Transverse colon (tissue), 4 donors: ENCODE measurements at regions of chr16 and their contacts with region 1.

Region 1: DNA sequence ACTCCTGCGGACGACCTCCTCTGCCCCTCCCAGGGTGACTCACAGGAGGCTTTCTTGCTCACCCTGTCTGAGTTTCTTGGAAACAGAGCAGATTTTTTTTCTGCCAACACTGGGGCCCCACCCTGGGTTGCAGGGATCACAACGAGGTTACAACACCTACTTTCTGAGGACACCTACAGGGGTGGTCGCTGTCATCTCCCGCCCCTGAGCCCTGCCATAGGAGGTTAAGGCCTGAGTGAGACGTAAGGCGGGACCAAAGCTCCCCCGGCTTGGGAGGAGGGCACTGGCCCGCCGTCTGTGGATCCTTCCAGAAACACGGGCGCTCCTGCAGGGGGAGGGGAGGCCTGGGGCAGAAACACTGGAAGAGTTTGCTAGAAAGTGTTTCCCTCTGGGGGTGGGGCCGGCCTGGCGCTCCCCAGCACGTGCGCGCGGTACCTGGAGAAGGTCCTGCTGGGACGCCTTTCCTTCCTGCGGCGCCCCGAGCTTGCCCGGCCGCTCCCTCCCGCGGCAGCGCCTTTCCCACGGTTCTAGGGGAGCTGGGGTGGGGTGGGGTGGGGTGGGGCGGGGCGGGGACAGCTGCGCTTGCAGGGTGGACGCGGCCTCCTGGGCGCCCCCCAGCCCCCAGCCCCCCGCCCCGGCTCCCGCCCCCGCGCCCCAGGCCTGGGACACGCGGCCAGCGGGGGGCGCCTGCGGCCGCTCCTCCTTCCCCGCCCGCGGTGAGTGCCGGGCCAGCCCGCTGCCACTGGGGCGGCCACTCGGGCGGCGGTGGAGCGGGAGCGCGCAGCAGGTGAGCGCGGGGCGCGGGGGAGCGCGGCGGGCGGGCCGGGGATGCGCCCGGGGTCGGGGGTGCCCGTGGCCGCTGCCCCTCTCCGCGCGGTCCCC is 20.7 kb upstream of the ADCY7 start:
- DNase-seq: peak; percentile 68
- H3K4me3 ChIP-seq: peak overlapping the region; percentile 46 to 78 (median 67)
- H3K27ac ChIP-seq: peak overlapping the region; percentile 47 to 60 (median 51)
- H3K4me1 ChIP-seq: peaks cover 8 to 34% (median 20%) of the 10 kb centered on the region in 4 donors
- H3K27me3 ChIP-seq: no peaks in the 10 kb centered on the region
- CTCF ChIP-seq: peak in 2 of 5 experiments; percentile 18 to 20
- EP300 ChIP-seq: no peak
- POLR2A ChIP-seq: no peak

Region 2: GRCh38 chr16:50354629-50355456 is 109.2 kb after region 1 on chr16:
- in situ Hi-C with region 1: loop called in 2 of 4 experiments (anchors 10 to 25 kb)
- intact Hi-C with region 1: no loop called
- DNase-seq: no peak
- H3K4me3 ChIP-seq: no peak overlapping the region
- H3K27ac ChIP-seq: peak overlapping the region; percentile 6 to 44 (median 32)
- H3K4me1 ChIP-seq: peaks cover 0 to 3% (median 0%) of the 10 kb centered on the region in 4 donors
- H3K27me3 ChIP-seq: no peaks in the 10 kb centered on the region
- CTCF ChIP-seq: peak; percentile 55 to 63 (median 59)
- EP300 ChIP-seq: no peak
- POLR2A ChIP-seq: no peak

Region 3: GRCh38 chr16:50665128-50665878 is 419.6 kb after region 1 on chr16:
- in situ Hi-C with region 1: loop called in 1 of 4 experiments (anchors 25 kb)
- intact Hi-C with region 1: no loop called
- DNase-seq: peak; percentile 82
- H3K4me3 ChIP-seq: peak overlapping the region; percentile 18 to 54 (median 32)
- H3K27ac ChIP-seq: peak overlapping the region; percentile 36 to 69 (median 68)
- H3K4me1 ChIP-seq: peaks cover 0 to 10% (median 6%) of the 10 kb centered on the region in 4 donors
- H3K27me3 ChIP-seq: no peaks in the 10 kb centered on the region
- CTCF ChIP-seq: peak; percentile 81 to 94 (median 91)
- EP300 ChIP-seq: no peak
- POLR2A ChIP-seq: no peak